Activated CD4-positive, alpha-beta memory T cell treated with anti-CD3 and anti-CD28 coated beads for 36 hours (primary cell): ENCODE measurements at regions of chr3 and their contacts with region 1.

Region 1: DNA sequence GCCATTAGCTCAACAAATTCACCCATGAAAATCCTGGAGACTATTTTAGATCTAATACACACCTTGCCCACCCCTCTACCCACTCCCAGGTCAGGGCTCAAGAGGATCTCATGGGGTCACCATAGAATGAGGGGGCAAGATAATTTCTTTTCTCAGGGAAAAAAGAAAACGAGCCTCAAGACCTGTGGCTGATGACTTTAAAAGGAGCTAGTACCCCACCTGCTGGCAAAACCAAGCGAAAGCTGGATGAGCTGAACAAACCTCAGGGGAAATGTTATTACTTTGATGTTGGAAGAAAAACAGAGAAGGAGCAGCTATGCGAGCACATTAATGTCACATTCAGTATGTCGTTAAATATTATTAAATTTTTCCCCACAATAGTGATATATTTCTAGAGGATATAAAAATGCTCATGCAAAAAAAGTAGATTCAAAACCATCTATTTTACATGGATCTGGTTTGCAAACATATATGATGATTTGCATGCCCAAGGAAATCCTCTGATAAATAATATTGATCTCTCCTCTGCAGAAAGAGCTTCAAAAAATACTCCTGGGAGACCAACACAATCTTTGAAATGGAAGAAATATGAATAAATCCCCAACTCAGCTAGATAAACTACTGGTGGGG is 37.7 kb downstream of the PLD1 start:
- DNase-seq: peak; percentile 63
- H3K4me3 Mint-ChIP-seq: no peak overlapping the region
- H3K27ac Mint-ChIP-seq: no peak overlapping the region
- H3K4me1 Mint-ChIP-seq: no peaks in the 10 kb centered on the region
- H3K27me3 Mint-ChIP-seq: peaks cover 1% of the 10 kb centered on the region

Region 2: GRCh38 chr3:171049861-171050444 is 722.6 kb before region 1 on chr3:
- CTCF ChIA-PET with region 1: interaction called, 20 read pairs
- POLR2A ChIA-PET with region 1: no interaction called
- intact Hi-C with region 1: loop called (anchors 5 kb)
- DNase-seq: peak; percentile 61
- H3K4me3 Mint-ChIP-seq: no peak overlapping the region
- H3K27ac Mint-ChIP-seq: no peak overlapping the region
- H3K4me1 Mint-ChIP-seq: no peaks in the 10 kb centered on the region
- H3K27me3 Mint-ChIP-seq: peaks cover 8% of the 10 kb centered on the region

Region 3: DNA sequence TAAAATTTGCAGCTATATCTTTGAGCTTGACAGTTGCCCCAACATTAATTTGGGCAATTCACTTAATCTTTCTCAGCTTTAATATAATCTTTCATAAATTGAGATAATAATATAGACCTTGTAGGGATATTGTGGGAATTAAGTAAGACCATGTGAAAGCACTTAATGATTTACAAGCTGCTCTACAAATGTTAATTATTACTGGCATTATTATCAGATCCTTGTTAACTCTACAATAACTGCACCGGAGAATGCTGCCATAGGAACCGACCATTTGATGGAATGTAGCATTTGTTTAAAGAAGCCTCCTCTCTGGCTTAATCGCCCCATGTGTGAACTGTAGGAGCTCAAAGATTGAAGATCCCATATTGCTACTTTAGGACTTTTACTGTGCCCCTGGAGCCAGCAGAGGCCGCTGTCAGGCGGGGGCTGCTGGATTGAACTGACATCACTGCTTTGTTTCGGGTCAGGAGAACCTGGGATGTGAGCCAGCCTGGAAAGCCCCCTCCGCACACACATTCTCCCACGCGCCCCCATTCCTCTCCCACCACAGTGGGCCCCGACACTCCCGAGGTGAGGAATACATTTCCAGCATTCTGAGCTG is 158.1 kb before region 1 on chr3:
- CTCF ChIA-PET with region 1: interaction called, 38 read pairs
- POLR2A ChIA-PET with region 1: interaction called, 3 read pairs
- intact Hi-C with region 1: no loop called
- DNase-seq: peak; percentile 20
- H3K4me3 Mint-ChIP-seq: no peak overlapping the region
- H3K27ac Mint-ChIP-seq: no peak overlapping the region
- H3K4me1 Mint-ChIP-seq: no peaks in the 10 kb centered on the region
- H3K27me3 Mint-ChIP-seq: peaks cover 7% of the 10 kb centered on the region

Region 4: DNA sequence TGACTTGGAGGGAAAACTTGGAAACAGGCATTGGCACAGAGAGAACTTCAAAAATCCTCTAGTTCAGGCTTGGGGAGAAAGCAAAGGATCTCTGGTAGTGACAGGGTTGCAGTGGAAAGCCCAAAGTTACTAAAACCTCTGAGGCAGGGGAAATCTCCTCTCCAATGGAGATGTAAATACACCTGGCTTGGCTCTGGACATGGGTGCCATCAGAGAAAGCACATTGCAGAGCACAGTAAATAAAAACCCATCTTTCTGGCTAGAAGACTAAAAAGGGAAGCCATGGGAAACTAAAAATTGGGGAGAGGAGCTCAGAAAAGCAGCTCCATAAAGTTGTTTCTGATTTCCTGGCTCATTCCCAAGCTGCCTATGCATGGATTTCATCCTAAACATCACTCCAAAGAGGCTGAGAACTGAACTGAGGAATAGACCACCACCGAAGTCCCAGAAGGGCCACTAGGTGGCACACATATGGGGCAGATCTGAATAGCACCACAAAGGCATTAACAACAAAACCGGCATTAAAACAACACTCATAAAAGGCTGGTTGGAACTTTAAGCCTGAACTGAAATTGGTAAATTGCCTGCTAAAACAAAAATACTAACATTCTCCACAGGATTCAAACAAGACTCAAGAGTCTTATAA is 68.7 kb before region 1 on chr3:
- CTCF ChIA-PET with region 1: interaction called, 28 read pairs
- POLR2A ChIA-PET with region 1: no interaction called
- intact Hi-C with region 1: loop called (anchors 1 kb)
- DNase-seq: peak; percentile 31
- H3K4me3 Mint-ChIP-seq: no peak overlapping the region
- H3K27ac Mint-ChIP-seq: no peak overlapping the region
- H3K4me1 Mint-ChIP-seq: no peaks in the 10 kb centered on the region
- H3K27me3 Mint-ChIP-seq: peaks cover 9% of the 10 kb centered on the region

Region 5: GRCh38 chr3:171753665-171754408 is 18.7 kb before region 1 on chr3:
- CTCF ChIA-PET with region 1: interaction called, 28 read pairs
- POLR2A ChIA-PET with region 1: no interaction called
- intact Hi-C with region 1: no loop called
- DNase-seq: no peak
- H3K4me3 Mint-ChIP-seq: no peak overlapping the region
- H3K27ac Mint-ChIP-seq: no peak overlapping the region
- H3K4me1 Mint-ChIP-seq: no peaks in the 10 kb centered on the region
- H3K27me3 Mint-ChIP-seq: peaks cover 18% of the 10 kb centered on the region